Activated CD4-positive, alpha-beta T cell treated with anti-CD3 and anti-CD28 coated beads, Interleukin-2, amount 10 ng/mL, durations not matched to agents 24 days and 14 days (primary cell): ENCODE measurements at regions of chr3 and their contacts with region 1.

Region 1: GRCh38 chr3:154252759-154253638 is 71.3 kb downstream of the DHX36 start:
- DNase-seq: peak; percentile 89
- H3K4me3 Mint-ChIP-seq: no peak overlapping the region
- H3K27ac Mint-ChIP-seq: no peak overlapping the region
- H3K4me1 Mint-ChIP-seq: peaks cover 3% of the 10 kb centered on the region
- H3K27me3 Mint-ChIP-seq: no peaks in the 10 kb centered on the region

Region 2: DNA sequence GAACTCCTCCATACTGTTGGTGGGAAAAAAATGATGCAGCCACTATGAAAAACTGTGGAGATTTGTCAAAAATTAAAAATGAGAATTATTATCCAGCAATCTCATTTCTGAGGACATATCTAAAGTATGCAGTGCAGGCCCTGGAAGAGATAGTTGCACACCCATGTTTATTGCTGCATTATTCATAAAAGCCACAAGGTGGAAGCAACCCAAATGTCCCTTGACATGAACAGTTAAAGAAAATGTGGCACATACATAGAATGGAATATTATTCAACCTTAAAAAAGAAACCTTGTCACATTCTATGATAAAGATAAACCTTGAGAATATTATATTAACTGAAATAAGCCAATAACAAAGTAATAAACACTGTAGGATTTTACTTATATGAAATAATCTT is 212.7 kb before region 1 on chr3:
- intact Hi-C with region 1: loop called (anchors 1 kb)
- DNase-seq: no peak
- H3K4me3 Mint-ChIP-seq: no peak overlapping the region
- H3K27ac Mint-ChIP-seq: no peak overlapping the region
- H3K4me1 Mint-ChIP-seq: no peaks in the 10 kb centered on the region
- H3K27me3 Mint-ChIP-seq: peaks cover 4% of the 10 kb centered on the region

Region 3: DNA sequence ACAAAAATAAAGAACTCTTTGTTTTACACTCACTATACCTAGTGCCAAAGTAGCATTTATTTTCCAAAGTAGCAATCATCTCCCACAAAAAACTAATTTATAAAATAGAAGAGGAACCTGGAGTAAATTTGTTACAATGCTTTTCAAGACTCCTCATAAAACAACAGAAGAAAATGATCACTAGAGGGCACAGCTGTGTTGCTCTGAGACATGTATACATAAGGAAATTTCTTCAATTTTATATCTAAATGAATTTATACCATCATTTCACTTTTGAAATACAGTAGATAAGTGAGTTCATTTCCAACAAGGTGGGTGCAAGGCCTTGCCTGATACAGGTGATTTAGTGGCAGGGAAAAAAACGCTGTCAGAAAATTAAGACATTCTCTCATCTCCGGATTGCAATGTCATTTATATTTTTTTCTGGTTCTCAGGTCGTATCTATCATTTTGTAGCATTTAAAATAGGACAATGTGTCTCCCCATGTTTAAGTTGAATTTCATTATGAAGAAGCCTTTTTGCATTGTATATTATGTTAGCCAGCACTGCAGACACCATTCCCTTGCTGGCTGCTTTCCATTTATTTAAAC is 157.1 kb before region 1 on chr3:
- intact Hi-C with region 1: loop called (anchors 2 kb)
- DNase-seq: no peak
- H3K4me3 Mint-ChIP-seq: no peak overlapping the region
- H3K27ac Mint-ChIP-seq: no peak overlapping the region
- H3K4me1 Mint-ChIP-seq: no peaks in the 10 kb centered on the region
- H3K27me3 Mint-ChIP-seq: no peaks in the 10 kb centered on the region